ENCODE measurements at regions of chr20 and their contacts with region 1.

Region 1: GRCh38 chr20:1437235-1437904 is 29.3 kb downstream of the NSFL1C start:
- DNase-seq: peak; percentile 66
- H3K4me3 Mint-ChIP-seq: no peak overlapping the region
- H3K27ac Mint-ChIP-seq: no peak overlapping the region
- H3K4me1 Mint-ChIP-seq: peaks cover 35% of the 10 kb centered on the region
- H3K27me3 Mint-ChIP-seq: peaks cover 17% of the 10 kb centered on the region

Region 2: DNA sequence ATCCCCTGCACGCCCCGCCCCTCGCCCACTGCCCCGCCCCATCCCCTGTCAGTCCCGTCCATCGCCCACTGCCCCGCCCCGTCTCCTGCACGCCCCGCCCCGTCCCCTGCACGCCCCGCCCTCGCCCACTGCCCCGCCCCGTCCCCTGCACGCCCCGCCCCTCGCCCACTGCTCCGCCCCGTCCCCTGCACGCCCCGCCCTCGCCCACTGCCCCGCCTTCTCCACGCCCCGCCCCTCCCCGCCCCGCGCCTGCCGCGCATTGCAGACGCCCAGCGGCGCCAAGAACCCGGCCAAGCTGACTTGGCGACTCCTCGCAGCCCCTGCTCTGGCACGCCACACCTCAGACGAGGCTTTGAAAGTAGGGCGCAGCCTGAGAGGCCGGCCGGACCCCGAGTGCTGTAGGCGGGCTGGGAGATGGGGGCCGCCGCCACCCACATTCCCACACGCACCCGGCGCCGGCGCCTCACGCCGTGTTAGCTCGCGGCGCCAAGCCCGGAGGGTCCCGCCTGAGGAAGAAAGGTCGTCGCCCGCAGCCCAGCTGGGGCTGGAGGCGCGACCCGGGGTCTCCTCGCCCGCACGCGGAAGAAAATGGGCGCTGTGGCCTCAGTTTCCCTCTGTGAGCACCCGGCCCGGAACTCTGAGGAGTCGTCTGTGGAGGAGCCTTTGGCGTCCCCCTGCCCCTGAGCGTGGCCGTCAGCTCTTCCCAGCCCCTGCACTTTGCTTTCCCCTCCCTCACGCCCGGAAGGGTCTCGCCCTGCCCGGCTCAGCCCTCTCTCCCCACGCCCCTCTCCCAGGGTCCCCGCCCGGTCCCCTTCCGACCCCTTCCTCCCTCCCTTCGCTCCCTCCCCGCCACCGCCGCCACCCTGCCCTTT is 211.4 kb before region 1 on chr20 and contains the start of gene RAD21L1:
- intact Hi-C with region 1: loop called (anchors 1 kb)
- DNase-seq: peak; percentile 57
- H3K4me3 Mint-ChIP-seq: peak within 1 kb of the TSS; percentile 84
- H3K27ac Mint-ChIP-seq: no peak within 1 kb of the TSS
- H3K4me1 Mint-ChIP-seq: peaks cover 7% of the 10 kb centered on the region
- H3K27me3 Mint-ChIP-seq: peaks cover 36% of the 10 kb centered on the region
- total RNA-seq, gene RAD21L1: not detected in 2 replicates

Region 3: DNA sequence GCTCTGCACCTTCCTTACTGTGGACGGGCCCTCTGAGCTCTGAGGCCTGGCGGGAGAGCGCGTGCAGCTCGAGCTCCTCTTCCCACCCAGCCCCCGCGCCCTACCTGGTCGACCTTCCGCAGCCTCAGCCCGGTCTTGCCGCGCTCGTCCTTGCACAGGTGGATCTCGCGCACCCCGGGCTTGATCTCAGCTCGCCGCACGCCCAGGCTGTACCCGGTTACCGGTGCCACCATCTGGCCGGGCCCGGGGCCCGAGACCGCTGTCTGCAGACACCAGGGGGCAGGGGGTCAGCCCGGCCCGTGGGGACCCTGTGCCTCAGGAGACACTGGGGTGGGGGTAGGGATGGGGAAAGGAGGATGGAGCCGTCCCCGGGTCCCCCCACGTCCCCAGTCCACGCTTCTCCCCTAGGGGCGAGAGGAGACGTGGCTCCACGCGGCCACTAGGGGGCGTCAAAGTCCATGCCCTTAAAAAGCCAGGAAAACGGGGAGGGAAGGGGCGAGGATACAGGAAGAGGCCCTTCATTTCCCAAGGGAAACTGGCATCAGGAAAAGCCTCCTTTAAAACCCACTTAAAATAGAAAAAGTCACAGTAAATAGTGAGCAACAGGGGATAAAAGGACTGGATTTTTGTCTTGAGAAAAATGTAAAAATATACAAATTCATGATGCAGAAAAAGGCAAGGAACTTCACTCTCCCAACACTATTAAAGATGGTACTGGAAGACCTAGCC is 124.0 kb before region 1 on chr20:
- intact Hi-C with region 1: loop called (anchors 1 kb)
- DNase-seq: peak; percentile 47
- H3K4me3 Mint-ChIP-seq: no peak overlapping the region
- H3K27ac Mint-ChIP-seq: no peak overlapping the region
- H3K4me1 Mint-ChIP-seq: peaks cover 16% of the 10 kb centered on the region
- H3K27me3 Mint-ChIP-seq: peaks cover 13% of the 10 kb centered on the region

Region 4: DNA sequence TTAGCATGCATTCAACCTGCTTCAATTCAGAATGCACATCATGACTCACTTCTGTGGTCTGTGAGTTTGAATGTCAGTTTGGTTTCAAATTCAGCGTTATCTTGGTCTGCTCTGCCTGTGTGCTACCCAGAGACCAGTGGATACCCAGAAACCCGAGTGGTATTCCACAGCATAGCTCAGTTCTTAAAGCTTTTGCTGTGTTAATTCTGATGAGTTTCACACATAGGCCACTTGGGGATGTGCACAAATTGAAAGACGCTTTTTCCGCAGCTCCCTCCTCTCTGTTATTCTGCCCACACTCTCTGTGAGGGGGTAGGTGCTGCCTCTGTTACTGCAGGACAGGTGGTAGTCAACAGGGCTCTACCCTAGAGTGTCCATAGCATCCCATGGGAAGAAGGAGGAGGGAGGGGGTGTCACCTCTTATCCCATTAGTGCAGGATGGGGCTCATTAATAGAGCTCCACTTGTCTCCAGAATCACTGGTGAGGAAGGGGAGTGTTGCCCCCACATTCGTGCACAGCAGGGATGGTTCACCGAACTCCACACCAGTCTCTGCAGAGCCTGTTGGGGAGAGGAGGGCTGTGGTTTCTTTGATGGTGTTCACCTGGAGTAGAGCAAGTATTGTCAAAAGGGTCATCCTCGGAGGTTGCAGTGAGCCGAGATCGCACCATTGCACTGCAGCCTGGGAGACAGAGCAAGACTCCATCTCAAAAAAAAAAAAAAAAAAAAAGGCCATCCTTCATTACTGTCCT is 79.3 kb before region 1 on chr20:
- intact Hi-C with region 1: loop called (anchors 1 kb)
- DNase-seq: peak; percentile 60
- H3K4me3 Mint-ChIP-seq: peak overlapping the region; percentile 68
- H3K27ac Mint-ChIP-seq: peak overlapping the region; percentile 88
- H3K4me1 Mint-ChIP-seq: peaks cover 62% of the 10 kb centered on the region
- H3K27me3 Mint-ChIP-seq: no peaks in the 10 kb centered on the region